IMR-90 (cell line): ENCODE measurements at regions of chrX and their contacts with region 1.

Region 1: GRCh38 chrX:97050392-97050791 is 166.7 kb downstream of the RPA4 start:
- DNase-seq: peak; percentile 38
- ATAC-seq: no peak
- H3K4me3 ChIP-seq: no peak overlapping the region
- H3K27ac ChIP-seq: no peak overlapping the region
- H3K4me1 ChIP-seq: no peaks in the 10 kb centered on the region
- H3K27me3 ChIP-seq: no peaks in the 10 kb centered on the region
- CTCF ChIP-seq: no peak
- POLR2A ChIP-seq: no peak
- RAD21 ChIP-seq: no peak

Region 2: GRCh38 chrX:96957718-96958117 is 92.7 kb before region 1 on chrX:
- CTCF ChIA-PET with region 1: no interaction called
- POLR2A ChIA-PET with region 1: no interaction called
- dilution Hi-C with region 1: no loop called
- in situ Hi-C with region 1: no loop called
- intact Hi-C with region 1: loop called (anchors 1 kb)
- DNase-seq: no peak
- ATAC-seq: no peak
- H3K4me3 ChIP-seq: no peak overlapping the region
- H3K27ac ChIP-seq: no peak overlapping the region
- H3K4me1 ChIP-seq: no peaks in the 10 kb centered on the region
- H3K27me3 ChIP-seq: no peaks in the 10 kb centered on the region
- CTCF ChIP-seq: no peak
- POLR2A ChIP-seq: no peak
- RAD21 ChIP-seq: no peak

Region 3: DNA sequence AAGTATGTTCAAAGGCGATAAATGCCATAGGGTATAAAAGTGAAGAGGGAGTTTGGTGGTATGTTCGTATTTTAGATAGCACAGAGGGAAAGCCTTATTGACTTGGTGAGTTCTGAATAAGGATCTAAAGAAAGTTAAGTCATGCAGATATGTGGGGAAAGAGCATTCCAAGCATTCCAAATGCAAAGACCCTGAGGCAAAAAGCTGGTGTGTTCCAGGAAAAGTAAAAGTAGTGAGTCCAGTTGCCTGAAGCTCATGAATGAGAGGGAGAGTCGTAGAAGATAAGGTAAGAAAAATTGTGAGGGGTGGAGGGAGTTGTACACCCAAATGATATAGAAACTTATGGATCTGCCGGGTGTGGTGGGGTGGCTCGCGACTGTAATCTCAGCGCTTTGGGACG is 260.0 kb after region 1 on chrX:
- CTCF ChIA-PET with region 1: no interaction called
- POLR2A ChIA-PET with region 1: interaction called, 11 read pairs
- dilution Hi-C with region 1: no loop called
- in situ Hi-C with region 1: no loop called
- intact Hi-C with region 1: no loop called
- DNase-seq: peak; percentile 14
- ATAC-seq: no peak
- H3K4me3 ChIP-seq: no peak overlapping the region
- H3K27ac ChIP-seq: no peak overlapping the region
- H3K4me1 ChIP-seq: no peaks in the 10 kb centered on the region
- H3K27me3 ChIP-seq: no peaks in the 10 kb centered on the region
- CTCF ChIP-seq: no peak
- POLR2A ChIP-seq: no peak
- RAD21 ChIP-seq: no peak

Region 4: GRCh38 chrX:98357146-98357545 is 1306.8 kb after region 1 on chrX:
- CTCF ChIA-PET with region 1: no interaction called
- POLR2A ChIA-PET with region 1: no interaction called
- dilution Hi-C with region 1: no loop called
- in situ Hi-C with region 1: no loop called
- intact Hi-C with region 1: no loop called
- DNase-seq: no peak
- ATAC-seq: no peak
- H3K4me3 ChIP-seq: no peak overlapping the region
- H3K27ac ChIP-seq: no peak overlapping the region
- H3K4me1 ChIP-seq: no peaks in the 10 kb centered on the region
- H3K27me3 ChIP-seq: no peaks in the 10 kb centered on the region
- CTCF ChIP-seq: no peak
- POLR2A ChIP-seq: no peak
- RAD21 ChIP-seq: no peak